Activated CD4-positive, alpha-beta T cell treated with anti-CD3 and anti-CD28 coated beads, Interleukin-2, amount 10 ng/mL, durations not matched to agents 24 days and 14 days (primary cell): ENCODE measurements at regions of chr1 and their contacts with region 1.

Region 1: DNA sequence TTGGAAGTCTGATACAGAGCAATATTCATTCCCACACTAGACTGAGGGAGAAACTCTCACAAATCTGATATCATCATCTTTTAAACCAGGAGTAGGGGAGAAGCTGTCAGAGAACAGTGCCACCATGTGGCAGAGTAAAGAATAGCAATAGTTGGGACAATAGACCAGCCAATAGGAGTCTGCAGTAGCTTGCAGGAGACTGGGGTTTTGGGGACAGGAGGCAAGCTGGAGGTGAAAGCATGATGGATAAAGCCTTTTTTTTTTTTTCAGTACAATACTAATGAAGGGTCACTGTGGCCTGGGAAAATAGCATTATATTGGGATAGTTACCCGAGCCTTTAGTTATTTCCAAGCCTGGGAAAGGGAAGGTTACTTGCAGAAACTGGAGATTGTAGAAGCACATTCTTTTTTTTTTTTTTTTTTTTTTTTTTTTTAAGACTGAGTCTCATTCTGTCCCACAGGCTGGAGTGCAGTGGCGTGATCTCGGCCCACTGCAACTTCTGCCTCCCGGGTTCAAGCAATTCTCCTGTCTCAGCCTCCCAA is 120.7 kb downstream of the S1PR1 start:
- DNase-seq: peak; percentile 94
- H3K4me3 Mint-ChIP-seq: no peak overlapping the region
- H3K27ac Mint-ChIP-seq: no peak overlapping the region
- H3K4me1 Mint-ChIP-seq: peaks cover 7% of the 10 kb centered on the region
- H3K27me3 Mint-ChIP-seq: peaks cover 36% of the 10 kb centered on the region

Region 2: DNA sequence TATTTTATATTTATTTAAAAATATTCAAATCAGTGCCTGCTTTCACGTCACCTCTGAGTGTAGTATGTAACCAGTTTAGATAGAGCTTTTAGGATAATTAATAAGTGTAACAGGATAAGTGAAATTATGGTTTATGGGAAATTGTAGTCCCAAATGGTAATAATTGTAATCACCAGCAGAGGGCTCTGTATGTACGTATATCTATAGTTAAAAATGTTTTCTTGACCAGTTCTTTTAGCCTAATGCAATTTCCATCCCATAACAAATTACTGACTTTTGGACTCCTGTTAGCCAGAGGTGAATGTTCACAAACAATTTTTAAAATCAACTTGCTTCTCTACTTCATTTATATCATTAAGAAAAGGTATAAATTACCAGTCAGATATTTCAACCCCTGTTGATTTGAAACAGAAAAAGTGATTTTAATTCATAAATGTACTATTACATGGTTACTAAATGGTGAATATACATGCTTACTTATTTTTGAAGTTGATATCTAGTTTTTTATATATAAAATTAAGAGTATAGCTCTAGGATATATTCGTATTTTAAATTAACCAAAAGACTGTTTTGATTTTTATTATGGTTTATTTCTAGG is 436.3 kb before region 1 on chr1:
- intact Hi-C with region 1: loop called (anchors 2 kb)
- DNase-seq: peak; percentile 70
- H3K4me3 Mint-ChIP-seq: no peak overlapping the region
- H3K27ac Mint-ChIP-seq: no peak overlapping the region
- H3K4me1 Mint-ChIP-seq: peaks cover 25% of the 10 kb centered on the region
- H3K27me3 Mint-ChIP-seq: no peaks in the 10 kb centered on the region

Region 3: DNA sequence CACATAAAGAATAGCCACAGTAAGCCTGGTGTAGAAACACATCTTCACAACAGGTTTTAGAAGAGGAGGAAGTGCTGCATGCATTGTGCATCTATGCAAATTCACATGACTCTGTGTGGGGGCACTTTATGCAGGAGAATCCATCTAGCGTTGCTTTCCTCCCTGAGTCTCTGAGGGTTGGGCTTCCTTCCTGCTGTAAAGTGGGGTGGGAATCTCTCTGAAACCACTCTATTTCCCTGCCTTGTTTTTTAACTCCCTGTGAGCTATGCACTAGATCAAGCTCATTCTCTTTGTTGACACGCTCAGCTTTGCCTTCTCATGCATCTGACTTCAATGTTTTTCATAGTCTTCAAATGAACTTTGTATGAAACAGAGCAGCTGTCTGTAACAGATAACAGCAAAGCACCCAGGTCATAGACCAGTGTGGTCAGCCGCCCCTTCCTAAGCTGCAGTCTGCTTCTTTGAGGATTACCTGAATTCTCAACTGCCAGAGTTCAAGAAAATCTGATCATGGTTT is 229.2 kb before region 1 on chr1:
- intact Hi-C with region 1: loop called (anchors 5 kb)
- DNase-seq: peak; percentile 76
- H3K4me3 Mint-ChIP-seq: peak overlapping the region; percentile 75
- H3K27ac Mint-ChIP-seq: peak overlapping the region; percentile 61
- H3K4me1 Mint-ChIP-seq: peaks cover 48% of the 10 kb centered on the region
- H3K27me3 Mint-ChIP-seq: no peaks in the 10 kb centered on the region

Region 4: GRCh38 chr1:101344745-101345144 is 12.8 kb before region 1 on chr1:
- intact Hi-C with region 1: no loop called
- DNase-seq: no peak
- H3K4me3 Mint-ChIP-seq: peak overlapping the region; percentile 4
- H3K27ac Mint-ChIP-seq: no peak overlapping the region
- H3K4me1 Mint-ChIP-seq: peaks cover 38% of the 10 kb centered on the region
- H3K27me3 Mint-ChIP-seq: peaks cover 15% of the 10 kb centered on the region